ENCODE measurements at regions of chr6 and their contacts with region 1.

Region 1: DNA sequence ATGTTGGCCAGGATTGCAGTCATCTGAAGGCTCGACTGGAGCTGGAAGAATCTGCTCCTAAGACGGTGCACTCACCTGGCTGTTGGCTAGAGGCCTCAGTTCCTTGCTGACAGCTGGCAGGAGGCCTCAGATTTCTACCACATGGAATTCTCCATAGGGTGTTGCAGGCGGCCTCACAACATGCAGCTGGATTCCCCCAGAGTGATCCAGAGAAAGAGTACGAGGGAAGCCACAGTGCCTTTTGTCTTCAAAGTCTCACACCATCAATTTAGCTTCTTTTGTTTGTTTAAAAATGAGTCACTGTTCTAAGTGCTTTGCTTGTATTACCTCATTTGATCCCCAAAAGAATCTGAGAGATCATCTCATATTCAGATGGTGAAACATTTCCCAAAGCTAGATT is 65.5 kb upstream of the FYN start:
- DNase-seq: no peak
- CTCF ChIP-seq: no peak

Region 2: DNA sequence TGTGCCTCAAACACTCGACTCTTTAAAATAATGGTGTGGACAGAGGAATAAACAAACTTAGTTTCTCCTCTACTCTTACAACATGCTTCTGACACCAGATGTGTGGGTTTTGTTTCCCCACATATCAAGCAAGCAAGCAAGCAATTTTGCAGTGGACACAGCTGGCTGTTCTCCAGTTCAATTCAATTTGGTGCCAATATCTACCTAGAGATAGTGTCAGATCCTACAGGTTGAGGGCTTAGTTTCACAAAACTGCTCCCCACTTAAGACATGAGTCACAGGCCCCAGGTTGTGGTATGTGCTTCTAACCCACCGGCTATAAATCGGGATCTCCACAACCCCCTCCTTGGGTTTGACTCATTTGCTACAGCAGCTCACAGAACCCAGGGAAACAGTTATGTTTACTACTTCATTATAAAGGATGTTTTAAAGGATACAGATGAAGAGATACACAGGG is 201.6 kb before region 1 on chr6:
- CTCF ChIA-PET with region 1: no interaction called
- POLR2A ChIA-PET with region 1: no interaction called
- DNase-seq: no peak
- CTCF ChIP-seq: no peak

Region 3: GRCh38 chr6:111894272-111894671 is 44.4 kb before region 1 on chr6:
- CTCF ChIA-PET with region 1: no interaction called
- POLR2A ChIA-PET with region 1: no interaction called
- DNase-seq: no peak
- CTCF ChIP-seq: no peak

Region 4: DNA sequence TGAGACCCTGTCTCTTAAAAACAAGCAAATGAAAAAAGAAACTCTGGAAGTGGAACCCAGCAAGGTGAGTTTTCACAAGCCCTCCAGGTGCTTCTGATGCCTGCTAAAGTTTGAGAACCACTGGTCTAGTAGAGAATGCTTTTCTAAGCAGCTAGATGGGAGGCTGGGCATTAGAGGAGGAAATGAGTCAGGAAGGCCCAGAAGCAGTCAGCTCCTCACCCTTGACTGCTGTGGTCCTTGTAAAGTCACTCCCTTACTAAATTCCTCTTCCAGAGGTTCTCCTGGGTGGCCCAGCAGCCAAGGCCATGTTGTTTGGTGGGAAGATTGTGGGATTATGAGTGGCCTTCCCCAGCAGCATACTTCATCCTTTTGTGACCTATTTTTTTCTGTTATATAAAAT is 13.4 kb before region 1 on chr6:
- CTCF ChIA-PET with region 1: interaction called, 11 read pairs
- POLR2A ChIA-PET with region 1: no interaction called
- DNase-seq: no peak
- CTCF ChIP-seq: no peak

Measured in GM10248 (cell line).